ENCODE measurements at regions of chr5 and their contacts with region 1.

Region 1: DNA sequence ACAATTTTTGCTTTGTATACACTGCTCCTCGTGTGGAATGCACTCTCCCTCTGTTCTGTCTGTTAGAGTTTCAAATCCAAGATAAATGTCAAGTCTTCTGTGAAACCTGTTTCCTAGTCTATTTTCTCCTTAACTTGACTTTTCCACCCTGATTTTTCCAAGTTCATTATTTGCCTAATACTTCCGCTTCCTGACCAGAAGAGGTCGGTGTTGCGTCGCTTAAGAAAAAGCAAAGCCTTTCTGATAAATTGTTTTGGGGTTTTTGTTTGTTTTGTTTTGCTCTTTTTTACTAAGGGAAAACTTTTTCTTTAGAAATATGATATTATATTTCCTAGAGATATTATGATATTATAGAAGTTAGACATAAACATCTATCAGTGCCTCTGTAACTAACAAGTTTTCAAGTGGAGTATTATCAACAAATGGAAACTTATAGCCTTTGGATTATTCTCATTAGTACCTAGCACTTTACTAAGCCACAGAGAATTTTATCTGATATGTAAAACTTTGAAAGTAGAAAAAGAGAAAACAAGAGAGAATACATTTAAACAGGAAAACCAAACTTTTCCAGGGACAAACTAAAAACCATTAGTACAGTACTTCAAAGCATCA is 55.8 kb downstream of the PHAX start:
- DNase-seq: peak; percentile 55 to 59
- ATAC-seq: peak in 1 of 2 experiments; percentile 64; a peak in 3 of 6 replicates
- H3K4me3 ChIP-seq: no peak overlapping the region
- H3K27ac ChIP-seq: no peak overlapping the region
- H3K4me1 ChIP-seq: peaks cover 9% of the 10 kb centered on the region; the same call in 2 of the 3 replicates
- CTCF ChIP-seq: peak; percentile 98
- EP300 ChIP-seq: no peak
- POLR2A ChIP-seq: no peak
- RAD21 ChIP-seq: peak; percentile 92

Region 2: DNA sequence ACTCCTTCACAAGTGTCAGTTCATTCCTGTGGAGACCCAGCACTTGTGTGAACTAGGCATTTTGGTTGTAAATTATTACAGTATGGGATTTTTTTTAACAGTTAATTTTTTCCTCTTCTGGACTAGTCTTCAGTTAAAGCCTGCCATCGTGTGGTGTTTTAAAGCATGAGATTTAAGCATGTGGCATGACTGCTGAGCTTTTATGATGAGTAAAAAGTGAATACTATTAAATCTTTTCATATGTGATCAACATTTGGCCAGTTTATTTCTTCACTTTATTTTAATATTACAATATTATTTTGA is 145.4 kb after region 1 on chr5:
- CTCF ChIA-PET with region 1: interaction called, 13 read pairs
- POLR2A ChIA-PET with region 1: no interaction called
- DNase-seq: peak in 1 of 2 experiments; percentile 41
- ATAC-seq: peak; percentile 68 to 79
- H3K4me3 ChIP-seq: no peak overlapping the region
- H3K27ac ChIP-seq: 0 out of 6 replicates have a peak overlapping the region, but pooled peaks of 1 of the 2 experiments have one; percentile 12
- H3K4me1 ChIP-seq: peaks cover 19% of the 10 kb centered on the region
- CTCF ChIP-seq: peak; percentile 68
- EP300 ChIP-seq: no peak
- POLR2A ChIP-seq: no peak
- RAD21 ChIP-seq: peak; percentile 37 to 67

Measured in A549 (cell line).